Gastrocnemius medialis (tissue), 4 donors: ENCODE measurements at regions of chr19 and their contacts with region 1.

Region 1: GRCh38 chr19:11987405-11988281 is 22.8 kb downstream of the ZNF763 start:
- DNase-seq: peak; percentile 93 to 96
- ATAC-seq: peak; percentile 89 to 90
- H3K4me3 ChIP-seq: peak overlapping the region; percentile 73 to 94 (median 91)
- H3K27ac ChIP-seq: peak overlapping the region; percentile 87 to 96 (median 94)
- H3K4me1 ChIP-seq: peaks cover 0 to 6% of the 10 kb centered on the region in 2 donors
- H3K27me3 ChIP-seq: no peaks in the 10 kb centered on the region
- CTCF ChIP-seq: no peak
- POLR2A ChIP-seq: peak; percentile 74 to 83

Region 2: DNA sequence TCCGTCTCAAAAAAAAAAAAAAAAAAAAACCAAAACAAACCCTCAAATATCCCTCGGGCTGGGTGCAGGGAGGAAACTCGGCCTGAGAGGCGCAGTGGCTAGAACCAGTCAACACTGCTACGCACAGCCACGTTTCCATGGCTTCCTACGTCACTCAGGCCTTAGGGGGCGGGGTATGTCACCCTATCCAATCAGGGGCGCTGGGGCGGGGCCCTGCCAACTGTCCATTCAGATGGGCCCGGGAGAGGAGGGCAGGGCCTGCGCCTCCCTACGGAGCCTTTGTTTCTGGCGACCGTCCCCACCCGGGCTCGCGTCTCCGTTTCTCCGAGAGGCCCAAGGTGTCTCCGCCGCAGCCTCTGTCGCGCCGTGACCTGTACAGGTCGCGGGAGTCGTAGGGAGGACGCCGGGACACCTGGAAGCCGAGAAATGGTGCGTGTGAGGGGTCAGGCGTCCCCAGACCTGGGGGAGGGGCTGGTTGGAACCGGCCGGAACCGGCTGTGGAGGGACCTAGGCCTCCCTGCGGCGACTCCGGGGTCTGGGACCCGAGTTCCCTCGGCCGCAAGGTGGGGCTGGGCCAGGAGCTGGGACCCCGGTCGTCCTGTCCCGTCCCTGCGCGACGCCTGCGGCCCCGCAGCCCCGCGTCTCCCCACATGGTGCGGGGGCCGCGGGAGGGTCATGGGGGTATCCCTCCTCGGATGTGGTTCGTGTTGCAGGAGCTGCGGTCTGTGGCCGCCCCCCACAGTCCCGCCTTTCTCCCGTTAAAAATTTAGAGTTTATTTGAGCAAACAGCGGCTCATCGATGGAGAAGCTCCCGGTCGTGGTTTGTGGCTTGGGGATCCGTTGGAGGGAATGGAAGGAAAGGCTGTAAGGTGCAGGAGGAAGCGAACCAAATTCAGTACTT is 390.2 kb before region 1 on chr19 and contains the start of gene ZNF627:
- in situ Hi-C with region 1: no loop called
- intact Hi-C with region 1: no loop called
- DNase-seq: peak; percentile 97 to 99
- ATAC-seq: peak; percentile 99
- H3K4me3 ChIP-seq: peak within 1 kb of the TSS; percentile 88 to 99 (median 92)
- H3K27ac ChIP-seq: peak within 1 kb of the TSS; percentile 89 to 95 (median 91)
- H3K4me1 ChIP-seq: peaks cover 9% of the 10 kb centered on the region in 2 donors
- H3K27me3 ChIP-seq: no peaks in the 10 kb centered on the region
- CTCF ChIP-seq: peak in 4 of 5 experiments; percentile 12 to 43 (median 26)
- POLR2A ChIP-seq: peak; percentile 84 to 90
- total RNA-seq, gene ZNF627: 2.3 to 4.5 (median 3.7) TPM

Region 3: DNA sequence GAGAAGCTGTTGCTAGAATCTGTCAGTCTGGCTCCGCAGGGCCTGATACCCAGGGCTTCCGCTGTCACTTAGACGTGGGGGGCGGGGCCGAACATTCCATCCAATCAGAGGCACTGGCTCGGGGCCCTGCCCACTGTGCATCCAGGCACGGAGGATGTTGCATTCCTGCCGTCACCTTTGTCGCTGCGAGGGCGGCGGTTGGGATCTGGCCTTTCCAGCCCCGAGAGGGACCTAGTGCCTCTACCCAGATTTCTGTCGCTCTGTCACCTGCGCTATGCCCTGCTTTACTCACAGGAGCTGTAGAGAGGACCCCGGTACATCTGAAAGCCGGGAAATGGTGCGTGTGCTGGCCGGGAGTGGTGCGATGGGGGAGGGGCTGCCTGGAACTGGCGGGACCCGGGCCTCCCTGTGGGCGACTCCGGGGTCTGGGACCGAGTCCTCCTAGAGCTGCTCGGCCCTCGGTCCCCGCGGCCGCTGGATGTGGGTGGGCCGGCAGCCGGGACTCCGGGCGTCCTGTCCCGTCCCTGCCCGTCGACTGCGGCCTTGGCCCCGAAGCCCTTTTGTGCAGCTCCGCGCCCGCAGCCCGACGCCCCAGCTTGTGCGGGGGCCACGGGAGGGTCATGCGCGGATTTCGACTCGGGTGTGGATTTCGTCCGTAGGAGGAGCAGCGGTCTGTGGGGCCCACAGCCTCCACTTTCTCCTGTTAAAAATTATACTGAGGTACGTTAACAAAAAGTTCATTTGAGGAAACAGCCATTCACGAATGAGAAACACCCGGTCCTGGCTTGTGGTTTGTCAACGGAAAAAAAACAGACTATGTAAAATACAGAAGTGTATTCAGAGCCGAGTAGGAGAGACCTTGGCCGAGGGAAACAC is 138.8 kb before region 1 on chr19 and contains the start of gene ZNF439:
- in situ Hi-C with region 1: no loop called
- intact Hi-C with region 1: no loop called
- DNase-seq: peak; percentile 57 to 58
- ATAC-seq: peak; percentile 54 to 60
- H3K4me3 ChIP-seq: peak within 1 kb of the TSS; percentile 51 to 64 (median 59)
- H3K27ac ChIP-seq: peak within 1 kb of the TSS in 2 of 4 donors; percentile 15 to 25
- H3K4me1 ChIP-seq: peaks cover 0 to 5% of the 10 kb centered on the region in 2 donors
- H3K27me3 ChIP-seq: peaks cover 0 to 17% (median 10%) of the 10 kb centered on the region in 3 donors
- CTCF ChIP-seq: no peak
- POLR2A ChIP-seq: no peak
- total RNA-seq, gene ZNF439: 0.42 to 0.68 (median 0.46) TPM in 3 of 4 donors, not detected in the other

Region 4: DNA sequence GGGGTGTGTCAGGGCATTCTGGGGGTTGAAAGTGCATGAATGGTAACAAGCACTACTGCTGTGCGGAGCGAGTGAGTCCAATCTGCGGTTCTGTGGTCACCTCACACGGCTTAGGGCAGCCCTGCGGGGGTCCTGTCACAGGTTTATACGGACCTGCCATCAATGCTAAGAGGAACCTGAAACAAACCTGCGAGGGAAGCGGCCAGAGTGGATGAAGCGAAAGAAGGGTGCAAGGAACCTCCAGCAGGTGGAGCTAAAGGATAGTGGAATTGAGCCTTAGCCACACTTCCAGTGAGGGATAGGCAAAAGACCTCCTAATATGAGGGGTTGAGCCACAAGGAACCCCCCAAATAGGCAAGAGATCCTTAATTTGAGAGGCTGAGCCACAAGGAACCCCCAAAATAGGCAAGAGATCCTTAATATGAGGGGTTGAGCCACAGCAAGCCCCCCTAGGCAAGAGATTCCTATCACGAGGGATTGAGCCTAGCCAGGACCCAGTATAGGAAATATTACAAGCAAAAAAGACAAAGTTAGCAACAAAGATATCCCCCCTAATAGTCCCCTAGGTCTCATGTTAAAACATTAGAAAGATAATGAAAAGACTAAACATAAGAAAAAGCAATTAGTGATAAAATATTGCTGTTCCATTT is 106.4 kb before region 1 on chr19:
- in situ Hi-C with region 1: no loop called
- intact Hi-C with region 1: loop called (anchors 1 kb)
- DNase-seq: peak; percentile 3 to 21
- ATAC-seq: peak in 1 of 2 donors; percentile 69
- H3K4me3 ChIP-seq: no peak overlapping the region
- H3K27ac ChIP-seq: no peak overlapping the region
- H3K4me1 ChIP-seq: no peaks in the 10 kb centered on the region
- H3K27me3 ChIP-seq: no peaks in the 10 kb centered on the region
- CTCF ChIP-seq: peak; percentile 29 to 77 (median 65)
- POLR2A ChIP-seq: no peak

Region 5: DNA sequence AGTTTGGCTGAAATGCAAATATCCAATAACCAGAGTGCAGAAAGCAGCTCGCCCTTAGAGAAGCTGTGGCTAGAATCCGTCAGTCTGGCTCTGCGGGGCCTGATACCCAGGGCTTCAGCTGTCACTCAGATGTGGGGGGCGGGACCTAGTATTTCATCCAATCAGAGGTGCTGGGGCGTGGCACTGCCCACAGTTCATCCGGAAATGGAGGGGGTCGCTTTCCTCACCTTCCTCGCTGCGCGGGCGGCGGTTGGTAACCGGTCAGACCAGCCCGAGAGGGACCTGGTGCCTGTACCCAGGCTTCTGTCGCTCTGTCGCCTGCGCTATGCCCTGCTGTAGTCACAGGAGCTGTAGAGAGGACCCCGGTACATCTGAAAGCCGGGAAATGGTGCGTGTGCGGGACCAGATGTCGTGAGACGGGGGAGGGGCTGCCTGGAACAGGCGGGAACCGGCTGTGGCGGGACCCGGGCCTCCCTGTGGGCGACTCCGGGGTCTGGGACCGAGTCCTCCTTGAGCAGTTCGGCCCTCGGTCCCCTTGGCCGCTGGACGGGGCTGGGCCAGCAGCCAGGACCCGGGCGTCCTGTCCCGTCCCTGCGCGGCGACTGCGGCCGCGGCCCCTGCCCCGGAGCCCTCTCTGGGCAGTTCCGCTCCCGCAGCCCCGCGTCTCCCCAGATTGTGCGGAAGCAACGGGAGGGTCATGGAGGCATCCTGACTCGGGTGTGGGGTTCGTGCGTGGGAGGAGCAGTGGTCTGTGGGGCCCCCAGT is 62.6 kb before region 1 on chr19 and contains the start of gene ZNF700:
- in situ Hi-C with region 1: loop called in 2 of 4 experiments (anchors 5 kb)
- intact Hi-C with region 1: loop called (anchors 1 kb)
- DNase-seq: peak; percentile 92
- ATAC-seq: peak; percentile 98 to 99
- H3K4me3 ChIP-seq: peak within 1 kb of the TSS; percentile 88 to 98 (median 88)
- H3K27ac ChIP-seq: peak within 1 kb of the TSS; percentile 89 to 94 (median 92)
- H3K4me1 ChIP-seq: peaks cover 4 to 20% of the 10 kb centered on the region in 2 donors
- H3K27me3 ChIP-seq: no peaks in the 10 kb centered on the region
- CTCF ChIP-seq: no peak
- POLR2A ChIP-seq: peak; percentile 64 to 77
- total RNA-seq, gene ZNF700: 1.3 to 5.8 (median 4.0) TPM

Region 6: DNA sequence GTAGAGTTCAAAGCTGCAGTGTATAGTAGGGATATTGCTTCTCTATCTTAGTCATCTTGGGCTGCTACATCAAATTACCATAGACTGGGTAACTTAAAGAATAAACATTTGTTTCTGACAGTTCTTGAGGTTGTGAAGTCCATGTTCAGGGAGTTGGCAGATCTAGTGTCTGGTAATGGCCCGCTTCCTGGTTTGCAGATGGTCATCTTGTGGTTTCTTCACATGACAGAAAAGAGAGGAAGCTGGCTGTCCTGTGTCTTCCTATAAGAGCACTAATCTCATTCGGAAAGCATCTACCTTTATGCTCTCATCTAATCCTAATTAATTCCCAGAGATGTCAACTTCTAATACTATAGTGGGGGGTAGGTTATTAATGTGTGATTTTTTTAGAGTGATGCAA is 16.6 kb before region 1 on chr19:
- in situ Hi-C with region 1: no loop called
- intact Hi-C with region 1: no loop called
- DNase-seq: no peak
- ATAC-seq: no peak
- H3K4me3 ChIP-seq: no peak overlapping the region
- H3K27ac ChIP-seq: no peak overlapping the region
- H3K4me1 ChIP-seq: no peaks in the 10 kb centered on the region
- H3K27me3 ChIP-seq: no peaks in the 10 kb centered on the region
- CTCF ChIP-seq: no peak
- POLR2A ChIP-seq: no peak

Region 7: DNA sequence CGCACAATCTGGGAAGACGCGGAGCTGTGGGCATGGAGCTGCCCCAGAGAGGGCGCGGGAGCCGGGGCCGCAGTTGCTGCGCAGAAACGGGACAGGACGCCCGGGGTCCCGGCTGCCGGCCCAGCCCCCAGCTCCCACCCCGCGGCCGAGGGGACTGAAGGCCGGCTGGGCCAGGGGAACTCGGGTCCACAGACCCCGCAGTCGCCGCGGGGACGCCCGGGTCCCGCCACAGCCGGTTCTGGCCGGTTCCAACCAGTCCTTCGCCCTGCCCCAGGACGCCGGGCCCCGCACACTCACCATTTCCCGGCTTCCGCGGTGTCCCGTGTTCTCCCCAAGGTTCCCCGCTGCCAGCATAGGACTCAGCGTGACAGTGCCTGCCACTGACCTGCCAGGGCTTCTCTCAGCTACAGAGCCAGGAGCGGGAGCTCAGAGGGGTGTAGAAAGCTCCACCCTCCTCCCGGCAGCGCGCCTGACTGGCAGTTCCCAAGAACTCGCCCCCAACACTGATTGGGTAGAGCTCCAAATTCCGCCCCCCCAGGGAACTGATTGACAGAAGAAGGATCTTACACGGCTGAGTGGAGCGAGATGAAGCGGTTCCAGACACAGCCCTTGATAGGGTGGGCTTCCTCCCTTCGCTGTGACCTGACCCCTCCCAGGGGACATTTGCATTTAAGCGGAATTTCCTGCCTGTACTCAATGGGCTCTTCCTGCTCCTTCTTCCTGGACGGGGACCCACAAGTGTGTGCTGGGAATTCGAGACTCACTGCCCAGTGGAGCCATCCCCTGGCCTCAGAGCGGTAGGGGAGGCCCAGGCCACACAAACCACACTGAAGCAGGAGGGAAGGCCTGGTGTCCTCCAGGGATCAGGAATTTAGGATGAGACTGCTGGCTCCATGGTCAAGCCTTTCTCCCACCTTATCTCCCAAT is 377.9 kb after region 1 on chr19 and contains the start of gene ZNF442:
- in situ Hi-C with region 1: no loop called
- intact Hi-C with region 1: loop called (anchors 10 kb)
- DNase-seq: peak; percentile 95 to 96
- ATAC-seq: peak; percentile 98 to 99
- H3K4me3 ChIP-seq: peak within 1 kb of the TSS; percentile 76 to 93 (median 84)
- H3K27ac ChIP-seq: peak within 1 kb of the TSS; percentile 86 to 97 (median 92)
- H3K4me1 ChIP-seq: peaks cover 6 to 11% of the 10 kb centered on the region in 2 donors
- H3K27me3 ChIP-seq: no peaks in the 10 kb centered on the region
- CTCF ChIP-seq: peak; percentile 49 to 75 (median 58)
- POLR2A ChIP-seq: peak; percentile 81 to 87
- total RNA-seq, gene ZNF442: 0.22 to 0.66 (median 0.42) TPM